ENCODE measurements at regions of chr3 and their contacts with region 1.

Region 1: DNA sequence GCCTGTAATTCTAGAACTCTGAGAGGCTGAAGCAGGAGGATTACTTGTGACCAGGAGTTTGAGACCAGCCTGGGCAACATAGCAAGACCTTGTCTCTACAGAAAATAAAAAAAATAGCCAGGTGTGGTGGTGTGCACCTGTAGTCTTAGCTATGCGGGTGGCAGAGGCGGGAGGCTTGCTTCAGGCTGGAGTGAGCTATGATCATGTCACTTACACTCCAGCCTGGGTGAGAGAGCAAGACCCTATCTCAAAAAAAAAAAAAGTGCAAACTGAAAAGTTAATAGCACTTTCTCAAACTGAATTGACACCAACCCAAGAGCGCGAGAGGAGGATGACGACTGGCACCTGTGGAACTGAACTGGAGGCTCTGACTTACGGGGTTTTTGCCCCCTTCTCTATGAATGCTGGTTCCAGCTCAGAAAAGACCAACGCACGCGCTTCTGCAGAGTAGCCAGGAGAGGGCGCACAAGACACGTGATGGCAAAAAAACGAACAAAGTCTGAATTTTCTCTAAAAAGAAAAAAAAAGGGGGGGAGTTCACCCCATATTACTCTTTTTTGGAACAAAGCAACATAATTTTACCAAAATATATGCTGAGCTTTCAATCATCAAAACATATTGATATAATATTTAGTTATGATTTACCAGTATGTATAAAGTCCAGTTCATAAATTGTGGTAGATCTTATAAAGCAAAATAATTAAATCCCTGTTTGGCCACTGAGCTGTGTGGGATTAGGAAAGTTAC is 23.7 kb downstream of the CFAP92 start:
- DNase-seq: peak; percentile 67
- H3K4me3 ChIP-seq: no peak overlapping the region
- H3K27ac ChIP-seq: no peak overlapping the region
- H3K4me1 ChIP-seq: no peaks in the 10 kb centered on the region; a peak in 1 of 4 replicates
- H3K27me3 ChIP-seq: peaks cover 8% of the 10 kb centered on the region; the same call in 1 of the 2 replicates
- CTCF ChIP-seq: peak; percentile 97
- EP300 ChIP-seq: no peak
- RAD21 ChIP-seq: peak; percentile 95

Region 2: GRCh38 chr3:128686465-128686864 is 283.7 kb before region 1 on chr3:
- CTCF ChIA-PET with region 1: no interaction called
- POLR2A ChIA-PET with region 1: no interaction called
- DNase-seq: no peak
- H3K4me3 ChIP-seq: no peak overlapping the region
- H3K27ac ChIP-seq: no peak overlapping the region
- H3K4me1 ChIP-seq: peaks cover 2 to 4% of the 10 kb centered on the region in 2 experiments; a peak in 2 of 4 replicates
- H3K27me3 ChIP-seq: no peaks in the 10 kb centered on the region
- CTCF ChIP-seq: no peak
- EP300 ChIP-seq: no peak
- RAD21 ChIP-seq: no peak

Region 3: DNA sequence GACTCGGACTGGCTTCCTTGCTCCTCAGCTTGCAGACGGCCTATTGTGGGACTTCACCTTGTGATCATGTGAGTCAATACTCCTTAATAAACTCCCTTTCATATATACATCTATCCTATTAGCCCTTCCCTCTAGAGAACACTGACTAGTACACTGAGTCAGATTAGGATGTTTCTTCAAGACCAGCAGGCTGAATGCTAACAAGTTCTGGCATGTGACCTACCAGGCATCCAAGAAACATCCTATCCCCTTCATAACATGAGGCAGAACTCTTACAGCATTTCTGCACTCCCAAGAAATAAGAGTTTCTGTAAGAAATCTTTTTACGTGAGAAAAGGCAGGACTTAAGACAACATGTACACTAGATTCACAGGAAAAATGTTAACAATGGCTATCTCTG is 14.4 kb after region 1 on chr3:
- CTCF ChIA-PET with region 1: interaction called, 69 read pairs
- POLR2A ChIA-PET with region 1: no interaction called
- DNase-seq: no peak
- H3K4me3 ChIP-seq: no peak overlapping the region
- H3K27ac ChIP-seq: no peak overlapping the region
- H3K4me1 ChIP-seq: peaks cover 0 to 10% of the 10 kb centered on the region in 2 experiments; a peak in 1 of 4 replicates
- H3K27me3 ChIP-seq: no peaks in the 10 kb centered on the region; the same call in 1 of the 2 replicates
- CTCF ChIP-seq: no peak
- EP300 ChIP-seq: no peak
- RAD21 ChIP-seq: no peak

Region 4: DNA sequence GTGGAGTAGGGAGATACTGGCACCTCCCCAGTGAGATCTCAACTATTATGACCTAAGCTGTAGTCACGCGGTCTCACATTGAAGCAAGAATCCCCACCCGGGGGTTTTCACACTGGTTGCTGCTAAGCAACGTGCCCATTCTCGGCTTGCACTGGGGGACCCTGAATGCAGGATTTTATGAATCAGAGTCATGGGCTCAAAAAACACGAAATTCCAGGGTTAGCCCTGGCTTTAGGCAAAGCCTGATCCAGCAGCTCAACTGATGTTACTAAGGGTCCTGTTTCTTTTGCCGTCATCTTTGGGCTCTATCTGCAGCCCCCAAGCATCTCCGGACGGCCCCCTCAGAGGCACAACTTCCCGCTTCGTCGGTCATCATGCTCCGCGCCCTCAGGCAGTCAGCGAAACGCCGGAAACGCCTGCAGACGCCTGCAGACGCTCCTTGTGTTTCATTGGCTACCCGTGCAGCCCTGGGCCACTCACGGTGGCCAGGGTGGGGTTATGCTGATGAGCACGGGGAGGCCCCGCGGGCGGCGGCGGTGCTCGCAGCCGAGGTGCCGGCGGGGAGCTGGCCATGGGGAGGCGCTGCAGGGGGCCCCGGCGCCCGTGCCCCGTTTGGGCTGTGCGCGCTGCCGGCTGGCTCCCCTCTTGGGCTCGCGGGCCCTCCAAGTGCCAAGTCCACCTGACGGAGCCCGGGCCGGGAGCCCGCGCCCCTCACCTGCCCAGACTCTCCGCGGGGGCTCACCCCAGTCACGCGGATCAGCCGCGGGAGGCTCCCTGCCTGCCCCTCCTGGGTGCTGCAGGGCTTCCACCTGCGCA is 56.8 kb after region 1 on chr3:
- CTCF ChIA-PET with region 1: interaction called, 37 read pairs
- POLR2A ChIA-PET with region 1: no interaction called
- DNase-seq: peak; percentile 96
- H3K4me3 ChIP-seq: peak overlapping the region; percentile 37 to 59
- H3K27ac ChIP-seq: no peak overlapping the region
- H3K4me1 ChIP-seq: peaks cover 0 to 10% of the 10 kb centered on the region in 2 experiments; a peak in 1 of 4 replicates
- H3K27me3 ChIP-seq: no peaks in the 10 kb centered on the region; the same call in 1 of the 2 replicates
- CTCF ChIP-seq: peak; percentile 68
- EP300 ChIP-seq: no peak
- RAD21 ChIP-seq: no peak

Region 5: DNA sequence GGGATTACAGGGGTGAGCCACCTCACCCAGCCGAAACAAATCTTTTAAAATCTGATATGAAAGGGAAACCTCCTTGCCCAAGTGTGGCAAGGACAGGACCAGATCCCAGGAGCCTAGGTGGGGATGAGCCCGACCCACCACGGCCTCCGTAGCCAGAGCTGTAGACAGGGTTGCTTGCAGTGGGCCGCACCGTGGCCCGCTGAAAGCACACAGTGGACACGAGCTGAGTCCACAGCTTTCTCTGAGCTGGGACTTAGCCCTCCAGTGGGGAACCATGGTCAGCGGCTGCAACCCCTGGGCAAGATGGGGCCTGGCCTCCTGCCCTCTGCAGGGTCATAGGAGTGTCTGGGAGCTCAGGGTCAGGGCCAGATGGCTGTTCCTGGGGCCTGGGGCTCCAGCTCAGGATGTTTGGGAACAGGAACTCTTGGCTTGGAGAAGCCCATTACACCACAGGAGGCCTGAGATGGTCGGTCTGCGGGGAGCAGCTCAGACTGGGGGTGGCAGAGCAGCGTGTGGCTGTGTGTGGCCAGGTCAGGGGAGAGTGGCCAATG is 115.1 kb after region 1 on chr3:
- CTCF ChIA-PET with region 1: interaction called, 15 read pairs
- POLR2A ChIA-PET with region 1: no interaction called
- DNase-seq: no peak
- H3K4me3 ChIP-seq: no peak overlapping the region
- H3K27ac ChIP-seq: no peak overlapping the region
- H3K4me1 ChIP-seq: no peaks in the 10 kb centered on the region
- H3K27me3 ChIP-seq: no peaks in the 10 kb centered on the region
- CTCF ChIP-seq: no peak
- EP300 ChIP-seq: no peak
- RAD21 ChIP-seq: no peak

Region 6: GRCh38 chr3:129120254-129121004 is 150.3 kb after region 1 on chr3:
- CTCF ChIA-PET with region 1: interaction called, 34 read pairs
- POLR2A ChIA-PET with region 1: no interaction called
- DNase-seq: peak; percentile 67
- H3K4me3 ChIP-seq: peak overlapping the region; percentile 81 to 86
- H3K27ac ChIP-seq: peak overlapping the region; percentile 52 to 72
- H3K4me1 ChIP-seq: peaks cover 0 to 14% of the 10 kb centered on the region in 2 experiments; a peak in 2 of 4 replicates
- H3K27me3 ChIP-seq: no peaks in the 10 kb centered on the region
- CTCF ChIP-seq: peak; percentile 35
- EP300 ChIP-seq: no peak
- RAD21 ChIP-seq: no peak

Region 7: DNA sequence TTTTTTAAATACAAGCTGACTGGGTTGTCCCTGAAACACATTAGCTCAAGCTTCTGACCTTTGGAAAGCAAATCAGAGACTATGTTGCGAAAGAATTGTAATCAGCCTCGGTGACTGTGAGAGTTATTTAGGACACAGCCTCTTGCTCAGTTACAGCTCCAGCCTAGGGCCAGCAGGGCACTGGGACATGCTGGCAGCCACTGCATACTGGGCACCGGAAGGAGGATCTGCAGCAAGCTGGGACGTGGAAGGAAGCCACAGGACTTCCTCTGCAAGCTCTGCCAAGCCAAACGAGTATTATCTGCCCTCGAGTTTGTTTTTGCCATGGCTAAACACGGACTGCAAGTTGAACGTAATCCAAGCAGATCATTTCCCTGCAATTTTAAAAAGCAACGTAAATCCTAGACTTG is 254.8 kb after region 1 on chr3:
- CTCF ChIA-PET with region 1: interaction called, 21 read pairs
- POLR2A ChIA-PET with region 1: no interaction called
- DNase-seq: peak; percentile 73
- H3K4me3 ChIP-seq: peak overlapping the region in 1 of 2 experiments; percentile 20; a peak in 1 of 4 replicates
- H3K27ac ChIP-seq: peak overlapping the region; percentile 71 to 91
- H3K4me1 ChIP-seq: peaks cover 3 to 30% of the 10 kb centered on the region in 2 experiments; a peak in 2 of 4 replicates
- H3K27me3 ChIP-seq: no peaks in the 10 kb centered on the region
- CTCF ChIP-seq: no peak
- EP300 ChIP-seq: no peak
- RAD21 ChIP-seq: no peak

Measured in SK-N-SH (cell line).